Endothelial cell of umbilical vein (primary cell): ENCODE measurements at regions of chr10 and their contacts with region 1.

Region 1: DNA sequence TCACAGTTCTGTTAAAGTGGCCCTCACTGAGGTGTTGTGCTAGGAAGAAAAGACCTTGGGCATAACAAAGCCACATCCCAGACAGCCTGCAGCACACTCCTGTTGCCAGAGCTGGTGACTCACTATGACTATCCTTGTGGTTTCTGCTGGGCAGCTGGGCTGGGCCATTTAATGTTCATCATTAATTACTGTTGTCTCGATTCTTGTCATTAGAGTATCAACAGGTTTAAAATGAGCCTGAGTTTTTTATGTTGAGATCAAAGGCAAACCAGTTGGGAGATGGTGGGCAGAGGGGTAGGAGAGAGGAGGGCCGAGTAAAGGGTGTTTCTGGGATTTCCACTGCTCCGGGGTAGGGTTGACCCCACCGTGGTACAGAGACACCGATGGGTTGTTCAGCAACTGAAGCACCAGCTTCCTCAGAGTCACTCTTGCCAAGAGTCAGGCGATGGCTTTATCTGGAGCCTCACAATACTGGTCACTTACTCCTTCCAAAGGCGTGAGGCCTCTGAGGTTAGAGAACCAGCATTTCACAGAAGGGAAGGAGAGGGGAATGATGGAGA is 128.7 kb upstream of the LYZL1 start:
- DNase-seq: peak; percentile 78
- H3K4me3 ChIP-seq: no peak overlapping the region
- H3K27ac ChIP-seq: peak overlapping the region; percentile 45
- H3K4me1 ChIP-seq: peaks cover 11% of the 10 kb centered on the region
- H3K27me3 ChIP-seq: no peaks in the 10 kb centered on the region
- CTCF ChIP-seq: no peak
- POLR2A ChIP-seq: no peak

Region 2: DNA sequence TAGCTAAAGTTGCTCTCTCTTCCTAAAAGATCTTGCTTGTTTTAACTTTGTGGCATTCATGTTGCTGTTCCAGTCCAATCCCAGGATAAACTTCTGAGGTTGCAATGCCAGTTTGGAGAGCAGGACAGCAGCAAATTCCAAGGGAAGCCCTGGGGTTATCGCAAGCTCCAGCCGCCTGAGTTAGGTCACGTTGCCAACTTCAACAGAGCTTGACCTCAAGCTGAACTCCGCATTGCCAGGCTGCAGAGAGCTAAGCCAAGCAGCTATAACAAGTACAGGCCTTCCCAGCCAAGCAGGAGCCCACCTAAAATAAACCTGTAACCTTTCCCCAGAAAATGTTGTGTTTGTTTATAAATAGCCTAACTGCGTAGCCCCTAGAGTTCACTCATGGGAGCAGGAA is 10.2 kb before region 1 on chr10:
- CTCF ChIA-PET with region 1: interaction called, 5 read pairs
- POLR2A ChIA-PET with region 1: no interaction called
- dilution Hi-C with region 1: no loop called
- intact Hi-C with region 1: loop called (anchors 1 kb)
- DNase-seq: peak; percentile 95
- H3K4me3 ChIP-seq: no peak overlapping the region
- H3K27ac ChIP-seq: peak overlapping the region; percentile 51
- H3K4me1 ChIP-seq: peaks cover 15% of the 10 kb centered on the region
- H3K27me3 ChIP-seq: no peaks in the 10 kb centered on the region
- CTCF ChIP-seq: no peak
- POLR2A ChIP-seq: peak; percentile 58